ENCODE measurements at regions of chr12 and their contacts with region 1.

Region 1: GRCh38 chr12:49967042-49967776 is 5.5 kb downstream of the AQP5 start:
- DNase-seq: peak; percentile 78
- ATAC-seq: peak; percentile 94
- H3K4me3 ChIP-seq: peak overlapping the region; percentile 28
- H3K27ac ChIP-seq: no peak overlapping the region
- H3K4me1 ChIP-seq: no peaks in the 10 kb centered on the region
- H3K27me3 ChIP-seq: peaks cover 86% of the 10 kb centered on the region
- CTCF ChIP-seq: peak; percentile 92
- POLR2A ChIP-seq: 0 out of 2 replicates have a peak, but pooled peaks have one; percentile 35
- RAD21 ChIP-seq: peak; percentile 94

Region 2: DNA sequence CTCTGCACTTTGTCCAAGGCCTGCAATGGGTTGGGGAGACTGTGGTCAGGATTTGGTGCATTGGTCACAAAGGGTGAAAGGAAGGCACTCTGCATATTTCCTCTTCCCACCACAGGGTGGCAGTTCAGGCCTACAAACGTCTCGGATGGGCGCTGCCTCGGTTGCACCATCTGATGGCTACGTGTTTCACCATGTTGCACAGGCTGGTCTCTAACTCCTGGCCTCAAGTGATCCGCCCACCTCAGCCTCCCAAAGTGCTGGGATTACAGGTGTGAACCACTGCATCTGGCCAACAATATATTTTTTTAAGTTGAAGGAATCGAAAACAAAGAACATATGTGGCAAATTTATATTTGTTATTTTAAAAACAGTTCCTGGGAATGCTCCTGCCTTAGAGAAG is 190.8 kb before region 1 on chr12:
- CTCF ChIA-PET with region 1: no interaction called
- POLR2A ChIA-PET with region 1: no interaction called
- dilution Hi-C with region 1: no loop called
- in situ Hi-C with region 1: loop called (anchors 10 kb)
- intact Hi-C with region 1: loop called (anchors 1 kb)
- DNase-seq: peak; percentile 79
- ATAC-seq: peak; percentile 97
- H3K4me3 ChIP-seq: no peak overlapping the region
- H3K27ac ChIP-seq: no peak overlapping the region
- H3K4me1 ChIP-seq: no peaks in the 10 kb centered on the region
- H3K27me3 ChIP-seq: peaks cover 4% of the 10 kb centered on the region; the same call in 1 of the 2 replicates
- CTCF ChIP-seq: peak; percentile 86
- POLR2A ChIP-seq: no peak
- RAD21 ChIP-seq: peak; percentile 93

Region 3: GRCh38 chr12:49866859-49867579 is 100.2 kb before region 1 on chr12:
- CTCF ChIA-PET with region 1: interaction called, 3 read pairs
- POLR2A ChIA-PET with region 1: no interaction called
- dilution Hi-C with region 1: no loop called
- in situ Hi-C with region 1: no loop called
- intact Hi-C with region 1: loop called (anchors 1 kb)
- DNase-seq: peak; percentile 46
- ATAC-seq: peak; percentile 25; the same call in 1 of the 2 replicates
- H3K4me3 ChIP-seq: no peak overlapping the region
- H3K27ac ChIP-seq: no peak overlapping the region
- H3K4me1 ChIP-seq: peaks cover 23% of the 10 kb centered on the region
- H3K27me3 ChIP-seq: peaks cover 22% of the 10 kb centered on the region
- CTCF ChIP-seq: peak; percentile 83
- POLR2A ChIP-seq: no peak
- RAD21 ChIP-seq: peak; percentile 86

Region 4: DNA sequence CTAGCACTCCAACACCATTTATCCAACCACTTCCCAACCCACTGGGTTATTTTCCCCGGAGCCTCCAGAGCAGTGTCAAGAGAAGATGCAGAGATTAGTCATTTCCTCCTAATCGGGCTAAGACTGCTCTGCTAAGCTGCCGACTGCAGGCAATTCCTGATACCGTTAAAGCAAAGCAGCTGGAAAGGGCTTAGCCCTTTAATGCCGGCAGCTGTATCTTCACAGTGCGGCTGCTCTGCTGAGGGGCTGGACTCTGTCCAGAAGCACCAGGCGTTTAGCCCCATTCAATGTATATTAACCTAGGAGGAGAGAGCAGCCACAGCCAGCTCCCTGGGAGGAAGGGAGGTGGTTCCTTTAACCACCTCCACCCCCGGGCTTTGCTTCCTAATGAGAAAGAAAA is 16.7 kb after region 1 on chr12:
- CTCF ChIA-PET with region 1: interaction called, 11 read pairs
- POLR2A ChIA-PET with region 1: no interaction called
- dilution Hi-C with region 1: no loop called
- in situ Hi-C with region 1: no loop called
- intact Hi-C with region 1: no loop called
- DNase-seq: peak; percentile 92
- ATAC-seq: peak; percentile 96
- H3K4me3 ChIP-seq: no peak overlapping the region
- H3K27ac ChIP-seq: peak overlapping the region; percentile 33; the same call in 1 of the 2 replicates
- H3K4me1 ChIP-seq: peaks cover 16% of the 10 kb centered on the region
- H3K27me3 ChIP-seq: no peaks in the 10 kb centered on the region
- CTCF ChIP-seq: 0 out of 2 replicates have a peak, but pooled peaks have one; percentile 18
- POLR2A ChIP-seq: no peak
- RAD21 ChIP-seq: peak; percentile 17; the same call in 1 of the 2 replicates

Region 5: GRCh38 chr12:50066433-50066832 is 99.2 kb after region 1 on chr12:
- CTCF ChIA-PET with region 1: interaction called, 33 read pairs
- POLR2A ChIA-PET with region 1: no interaction called
- dilution Hi-C with region 1: no loop called
- in situ Hi-C with region 1: no loop called
- intact Hi-C with region 1: loop called (anchors 1 kb)
- DNase-seq: peak; percentile 90
- ATAC-seq: peak; percentile 84
- H3K4me3 ChIP-seq: no peak overlapping the region
- H3K27ac ChIP-seq: peak overlapping the region; percentile 61
- H3K4me1 ChIP-seq: peaks cover 10% of the 10 kb centered on the region
- H3K27me3 ChIP-seq: no peaks in the 10 kb centered on the region
- CTCF ChIP-seq: no peak
- POLR2A ChIP-seq: no peak
- RAD21 ChIP-seq: no peak

Region 6: DNA sequence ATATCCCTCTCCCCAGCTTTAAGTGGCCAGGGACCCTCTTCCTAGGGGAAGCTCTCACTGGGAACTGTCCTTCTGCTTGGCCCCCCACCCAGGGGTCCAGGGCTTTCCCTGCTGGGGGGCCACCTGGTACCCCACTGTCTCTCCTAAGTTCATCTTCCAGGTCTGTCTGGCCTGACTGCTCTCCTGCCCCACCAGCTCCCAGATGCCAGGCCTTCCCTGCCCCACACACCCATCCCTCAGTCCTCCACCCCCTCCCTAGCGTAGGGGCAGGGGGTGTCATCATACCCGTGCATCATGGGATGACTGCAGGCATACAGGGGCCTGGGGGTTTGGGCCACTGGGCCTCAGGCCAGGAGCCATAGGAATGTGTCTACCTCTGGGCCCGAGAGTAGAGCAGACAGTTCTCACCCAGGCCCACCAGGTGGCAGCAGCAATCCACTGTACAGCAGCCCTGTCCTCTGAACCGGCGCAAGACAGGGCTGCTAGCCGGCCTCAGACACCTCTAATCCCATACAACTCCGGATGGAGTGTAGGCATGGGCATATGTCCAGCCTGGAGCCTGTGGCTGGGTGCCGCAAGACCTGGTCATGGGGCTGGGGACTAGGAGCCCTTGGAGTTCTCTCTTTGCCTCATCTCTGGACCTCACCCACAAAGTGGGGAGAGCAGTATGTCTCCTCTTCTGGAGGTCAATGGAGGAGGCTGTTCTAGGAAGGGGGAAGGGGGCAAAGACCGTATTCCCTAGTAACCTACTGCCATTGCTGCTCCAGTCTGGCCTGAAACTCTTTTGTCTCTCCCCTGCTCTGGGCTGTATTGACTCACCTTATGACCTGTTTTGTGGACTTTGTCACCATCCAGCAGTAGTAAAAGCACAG is 108.0 kb after region 1 on chr12:
- CTCF ChIA-PET with region 1: interaction called, 33 read pairs
- POLR2A ChIA-PET with region 1: no interaction called
- dilution Hi-C with region 1: no loop called
- in situ Hi-C with region 1: no loop called
- intact Hi-C with region 1: loop called (anchors 1 kb)
- DNase-seq: peak; percentile 76
- ATAC-seq: peak; percentile 98
- H3K4me3 ChIP-seq: no peak overlapping the region
- H3K27ac ChIP-seq: no peak overlapping the region
- H3K4me1 ChIP-seq: peaks cover 3% of the 10 kb centered on the region; the same call in 1 of the 2 replicates
- H3K27me3 ChIP-seq: no peaks in the 10 kb centered on the region
- CTCF ChIP-seq: peak; percentile 94
- POLR2A ChIP-seq: no peak
- RAD21 ChIP-seq: peak; percentile 95

Region 7: GRCh38 chr12:50174971-50175715 is 207.9 kb after region 1 on chr12:
- CTCF ChIA-PET with region 1: no interaction called
- POLR2A ChIA-PET with region 1: no interaction called
- dilution Hi-C with region 1: no loop called
- in situ Hi-C with region 1: loop called (anchors 10 kb)
- intact Hi-C with region 1: loop called (anchors 10 kb)
- DNase-seq: peak; percentile 85
- ATAC-seq: peak; percentile 44; the same call in 1 of the 2 replicates
- H3K4me3 ChIP-seq: no peak overlapping the region
- H3K27ac ChIP-seq: peak overlapping the region; percentile 27; the same call in 1 of the 2 replicates
- H3K4me1 ChIP-seq: 0 out of 2 replicates have a peak, but pooled peaks cover 2% of the 10 kb centered on the region
- H3K27me3 ChIP-seq: no peaks in the 10 kb centered on the region
- CTCF ChIP-seq: peak; percentile 72
- POLR2A ChIP-seq: no peak
- RAD21 ChIP-seq: peak; percentile 74

Measured in IMR-90 (cell line).